ENCODE measurements at regions of chr6 and their contacts with region 1.

Region 1: GRCh38 chr6:125779924-125780539 is 10.7 kb upstream of the NCOA7 start:
- DNase-seq: peak; percentile 90
- H3K4me3 Mint-ChIP-seq: no peak overlapping the region
- H3K27ac Mint-ChIP-seq: no peak overlapping the region
- H3K4me1 Mint-ChIP-seq: peaks cover 14% of the 10 kb centered on the region
- H3K27me3 Mint-ChIP-seq: no peaks in the 10 kb centered on the region

Region 2: GRCh38 chr6:125749173-125749864 is 30.7 kb before region 1 on chr6 and contains the start of gene HEY2:
- CTCF ChIA-PET with region 1: interaction called, 3 read pairs
- POLR2A ChIA-PET with region 1: interaction called, 4 read pairs
- intact Hi-C with region 1: loop called (anchors 1 kb)
- DNase-seq: peak; percentile 88
- H3K4me3 Mint-ChIP-seq: peak within 1 kb of the TSS; percentile 79
- H3K27ac Mint-ChIP-seq: no peak within 1 kb of the TSS
- H3K4me1 Mint-ChIP-seq: peaks cover 29% of the 10 kb centered on the region
- H3K27me3 Mint-ChIP-seq: peaks cover 67% of the 10 kb centered on the region
- total RNA-seq, gene HEY2: not detected

Region 3: DNA sequence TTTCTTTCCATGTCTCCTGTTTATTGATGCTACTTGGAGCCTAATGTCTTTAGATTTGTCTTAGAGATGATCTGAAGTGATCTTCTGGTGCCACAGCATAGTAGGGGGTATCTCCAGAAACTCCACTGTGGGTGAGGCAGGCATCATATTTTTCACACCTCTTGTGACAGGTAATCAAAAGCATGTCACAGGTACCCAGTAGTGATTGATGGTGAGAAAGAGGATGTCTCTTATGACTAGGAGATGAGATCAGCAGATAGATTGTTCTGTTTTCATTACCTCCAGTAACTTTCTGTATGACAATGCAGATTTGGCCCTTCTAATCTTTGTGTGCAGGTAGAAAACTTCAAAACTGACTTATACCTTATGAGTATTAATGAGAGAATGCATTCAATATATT is 24.2 kb after region 1 on chr6:
- CTCF ChIA-PET with region 1: interaction called, 4 read pairs
- POLR2A ChIA-PET with region 1: interaction called, 3 read pairs
- intact Hi-C with region 1: loop called (anchors 1 kb)
- DNase-seq: peak; percentile 58
- H3K4me3 Mint-ChIP-seq: no peak overlapping the region
- H3K27ac Mint-ChIP-seq: peak overlapping the region; percentile 9
- H3K4me1 Mint-ChIP-seq: peaks cover 66% of the 10 kb centered on the region
- H3K27me3 Mint-ChIP-seq: peaks cover 2% of the 10 kb centered on the region

Region 4: DNA sequence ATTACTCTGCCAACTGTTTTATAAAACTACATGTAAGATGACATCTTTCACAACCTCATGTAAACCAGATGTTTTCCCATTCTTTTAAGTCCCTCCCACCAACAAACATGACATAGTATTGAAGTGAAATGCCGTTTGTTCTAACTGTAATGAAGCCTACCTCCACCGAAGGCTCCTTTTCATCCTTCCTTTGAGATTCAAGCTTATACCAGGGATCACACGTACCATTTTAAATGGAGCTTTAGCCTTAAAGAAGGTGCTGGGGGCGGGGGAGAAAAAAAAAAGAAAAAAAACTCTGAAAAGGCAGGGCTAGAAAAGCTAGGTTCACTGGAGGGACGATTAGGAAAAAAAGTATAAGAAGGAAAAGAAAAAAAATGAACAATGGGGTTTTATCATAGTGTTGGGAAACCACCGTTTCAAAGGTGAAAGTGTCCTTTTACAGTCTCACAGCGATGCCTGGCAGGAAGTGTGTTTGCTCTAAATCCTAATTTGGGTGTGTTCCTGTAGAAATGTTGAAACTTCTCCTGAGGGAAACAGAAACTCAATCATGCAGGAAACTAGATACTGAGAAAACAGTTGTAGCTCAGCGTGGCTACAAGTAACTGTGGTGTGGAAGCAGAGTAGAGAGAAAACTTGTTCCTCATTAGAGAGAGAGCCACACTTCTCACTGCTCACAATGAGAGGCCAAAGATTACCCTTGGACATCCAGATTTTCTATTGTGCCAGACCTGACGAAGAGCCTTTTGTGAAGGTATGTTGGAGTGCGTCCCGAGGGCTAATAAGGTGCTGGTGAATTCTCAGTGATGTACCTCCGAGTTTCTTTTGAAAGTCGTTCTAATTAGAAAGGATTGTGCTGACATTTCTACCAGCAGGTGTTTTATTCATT is 138.9 kb after region 1 on chr6:
- CTCF ChIA-PET with region 1: interaction called, 3 read pairs
- POLR2A ChIA-PET with region 1: interaction called, 11 read pairs
- intact Hi-C with region 1: loop called (anchors 1 kb)
- DNase-seq: peak; percentile 65
- H3K4me3 Mint-ChIP-seq: peak overlapping the region; percentile 87
- H3K27ac Mint-ChIP-seq: peak overlapping the region; percentile 96
- H3K4me1 Mint-ChIP-seq: peaks cover 47% of the 10 kb centered on the region
- H3K27me3 Mint-ChIP-seq: no peaks in the 10 kb centered on the region

Region 5: DNA sequence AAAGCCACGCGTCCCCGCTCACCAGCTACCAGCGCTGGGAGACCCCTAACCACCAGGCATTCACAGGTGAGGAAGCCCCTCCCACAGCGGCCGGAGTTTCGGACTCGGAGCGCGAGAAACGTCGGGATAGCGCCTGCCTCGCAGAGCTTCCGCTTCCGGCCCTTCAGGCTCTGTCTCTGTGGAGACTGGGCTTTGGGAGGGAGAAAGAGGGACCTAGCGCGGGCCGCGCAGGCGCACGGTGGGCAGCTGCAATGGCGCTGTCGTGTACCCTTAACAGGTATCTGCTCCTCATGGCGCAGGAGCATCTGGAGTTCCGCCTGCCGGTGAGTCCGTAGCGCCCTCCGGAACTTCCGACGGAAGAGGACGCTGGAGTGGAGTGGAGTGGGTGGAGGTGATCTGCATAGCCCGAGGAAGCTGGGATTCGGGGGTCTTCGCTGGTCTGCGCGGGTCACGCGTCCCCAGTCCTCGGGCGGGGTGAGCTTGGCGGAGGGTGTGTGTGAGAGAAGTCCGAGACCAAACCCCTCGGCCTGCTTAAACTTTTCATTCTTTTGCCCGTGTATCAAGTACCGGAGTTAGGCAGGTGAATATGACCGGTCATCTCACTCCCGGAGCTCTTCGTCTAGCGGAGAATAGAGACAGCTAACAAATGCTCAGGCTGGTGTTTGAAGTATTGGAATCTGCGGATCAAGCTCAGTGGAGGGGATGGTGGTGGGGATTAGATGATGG is 206.4 kb after region 1 on chr6 and contains the start of gene TRMT11:
- CTCF ChIA-PET with region 1: interaction called, 8 read pairs
- POLR2A ChIA-PET with region 1: interaction called, 25 read pairs
- intact Hi-C with region 1: loop called (anchors 1 kb)
- DNase-seq: peak; percentile 90
- H3K4me3 Mint-ChIP-seq: peak within 1 kb of the TSS; percentile 9
- H3K27ac Mint-ChIP-seq: no peak within 1 kb of the TSS
- H3K4me1 Mint-ChIP-seq: peaks cover 20% of the 10 kb centered on the region
- H3K27me3 Mint-ChIP-seq: no peaks in the 10 kb centered on the region
- total RNA-seq, gene TRMT11: 42.8 to 46.9 TPM

Region 6: DNA sequence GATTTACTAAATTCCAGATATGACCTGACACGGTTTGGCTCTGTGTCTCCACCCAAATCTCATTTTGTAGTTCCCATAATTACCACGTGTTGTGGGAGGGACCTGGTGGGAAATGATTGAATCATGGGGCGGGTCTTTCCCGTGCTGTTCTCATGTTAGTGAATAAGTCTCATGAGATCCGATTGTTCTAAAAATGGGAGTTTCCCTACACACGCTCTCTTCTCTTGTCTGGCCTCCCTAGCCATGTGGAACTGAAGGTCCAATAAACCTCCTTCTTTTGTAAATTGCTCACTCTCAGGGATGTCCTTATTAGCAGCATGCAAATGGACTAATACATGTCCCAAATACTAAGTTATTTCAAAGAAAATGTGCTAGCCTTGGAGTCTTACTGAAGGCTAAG is 681.0 kb after region 1 on chr6:
- CTCF ChIA-PET with region 1: no interaction called
- POLR2A ChIA-PET with region 1: no interaction called
- intact Hi-C with region 1: no loop called
- DNase-seq: no peak
- H3K4me3 Mint-ChIP-seq: no peak overlapping the region
- H3K27ac Mint-ChIP-seq: no peak overlapping the region
- H3K4me1 Mint-ChIP-seq: no peaks in the 10 kb centered on the region
- H3K27me3 Mint-ChIP-seq: no peaks in the 10 kb centered on the region